B cell (primary cell): ENCODE measurements at regions of chr2 and their contacts with region 1.

Region 1: GRCh38 chr2:75640621-75641121 is 5.9 kb upstream of the MRPL19 start:
- DNase-seq: peak; percentile 44
- ATAC-seq: peak; percentile 97
- H3K4me3 ChIP-seq: no peak overlapping the region
- H3K4me3 Mint-ChIP-seq: no peak overlapping the region
- H3K27ac ChIP-seq: no peak overlapping the region
- H3K27ac Mint-ChIP-seq: no peak overlapping the region
- H3K4me1 ChIP-seq: no peaks in the 10 kb centered on the region
- H3K4me1 Mint-ChIP-seq: no peaks in the 10 kb centered on the region
- H3K27me3 ChIP-seq: peaks cover 0 to 14% (median 2%) of the 10 kb centered on the region in 4 experiments
- H3K27me3 Mint-ChIP-seq: peaks cover 29% of the 10 kb centered on the region
- CTCF ChIP-seq: peak; percentile 99

Region 2: DNA sequence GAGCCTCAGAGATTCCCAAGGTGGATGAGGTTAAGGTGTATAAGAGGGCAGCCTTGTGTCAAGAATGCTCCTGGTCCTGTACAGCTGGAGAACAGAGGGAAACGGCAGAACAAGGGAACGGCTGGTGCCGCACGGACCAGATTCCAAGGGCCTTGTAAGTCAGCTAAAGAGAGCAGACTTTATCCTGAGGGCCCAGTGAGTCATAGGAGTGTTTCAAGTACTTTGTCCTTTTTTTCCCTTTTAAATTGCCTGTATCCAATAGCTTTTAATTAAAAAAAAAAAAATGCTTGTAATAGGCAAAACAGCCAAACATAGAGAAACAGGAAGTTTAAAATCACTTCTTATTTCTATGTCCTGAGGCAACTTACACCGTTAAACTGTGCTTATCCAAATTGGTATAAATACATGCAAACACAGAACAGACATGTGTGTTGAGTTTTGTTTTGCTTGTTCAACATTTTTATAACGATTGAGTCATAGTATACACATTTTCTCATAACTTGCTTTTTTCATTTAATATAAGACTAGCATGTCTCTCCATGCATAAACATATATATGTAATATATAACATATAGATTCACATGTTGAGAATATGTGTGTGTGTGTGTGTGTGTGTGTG is 37.8 kb before region 1 on chr2:
- CTCF ChIA-PET with region 1: no interaction called
- POLR2A ChIA-PET with region 1: no interaction called
- intact Hi-C with region 1: no loop called
- DNase-seq: no peak
- ATAC-seq: no peak
- H3K4me3 ChIP-seq: no peak overlapping the region
- H3K4me3 Mint-ChIP-seq: no peak overlapping the region
- H3K27ac ChIP-seq: no peak overlapping the region
- H3K27ac Mint-ChIP-seq: no peak overlapping the region
- H3K4me1 ChIP-seq: no peaks in the 10 kb centered on the region
- H3K4me1 Mint-ChIP-seq: peaks cover 2% of the 10 kb centered on the region
- H3K27me3 ChIP-seq: peaks cover 0 to 14% (median 0%) of the 10 kb centered on the region in 4 experiments
- H3K27me3 Mint-ChIP-seq: peaks cover 31% of the 10 kb centered on the region
- CTCF ChIP-seq: no peak

Region 3: DNA sequence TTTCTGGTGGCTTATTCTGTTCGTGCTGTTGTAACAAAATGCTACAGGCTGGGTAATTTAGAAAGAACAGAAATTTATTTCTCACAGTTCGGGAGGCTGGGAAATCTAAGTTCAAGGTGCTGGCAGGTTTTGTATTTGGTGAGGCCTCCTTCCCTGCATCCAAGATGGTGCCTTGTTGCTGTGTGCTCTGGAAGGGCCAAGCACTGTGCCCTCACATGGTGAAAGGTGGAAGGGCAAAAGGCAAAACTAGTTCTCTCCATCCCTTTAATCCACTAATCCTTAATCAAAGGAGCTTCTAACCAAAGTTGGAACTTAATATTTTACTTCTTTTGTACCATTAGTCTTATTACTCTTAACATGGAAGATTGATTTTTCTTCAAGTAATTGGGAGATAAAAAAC is 13.3 kb after region 1 on chr2:
- CTCF ChIA-PET with region 1: interaction called, 15 read pairs
- POLR2A ChIA-PET with region 1: no interaction called
- intact Hi-C with region 1: no loop called
- DNase-seq: no peak
- ATAC-seq: no peak
- H3K4me3 ChIP-seq: no peak overlapping the region
- H3K4me3 Mint-ChIP-seq: no peak overlapping the region
- H3K27ac ChIP-seq: no peak overlapping the region
- H3K27ac Mint-ChIP-seq: no peak overlapping the region
- H3K4me1 ChIP-seq: no peaks in the 10 kb centered on the region
- H3K4me1 Mint-ChIP-seq: peaks cover 7% of the 10 kb centered on the region
- H3K27me3 ChIP-seq: no peaks in the 10 kb centered on the region
- H3K27me3 Mint-ChIP-seq: no peaks in the 10 kb centered on the region
- CTCF ChIP-seq: no peak

Region 4: GRCh38 chr2:75853441-75853840 is 212.8 kb after region 1 on chr2:
- CTCF ChIA-PET with region 1: no interaction called
- POLR2A ChIA-PET with region 1: no interaction called
- intact Hi-C with region 1: no loop called
- DNase-seq: no peak
- ATAC-seq: no peak
- H3K4me3 ChIP-seq: no peak overlapping the region
- H3K4me3 Mint-ChIP-seq: no peak overlapping the region
- H3K27ac ChIP-seq: no peak overlapping the region
- H3K27ac Mint-ChIP-seq: no peak overlapping the region
- H3K4me1 ChIP-seq: no peaks in the 10 kb centered on the region
- H3K4me1 Mint-ChIP-seq: no peaks in the 10 kb centered on the region
- H3K27me3 ChIP-seq: no peaks in the 10 kb centered on the region
- H3K27me3 Mint-ChIP-seq: no peaks in the 10 kb centered on the region
- CTCF ChIP-seq: no peak